ENCODE measurements at regions of chrX and their contacts with region 1.

Region 1: DNA sequence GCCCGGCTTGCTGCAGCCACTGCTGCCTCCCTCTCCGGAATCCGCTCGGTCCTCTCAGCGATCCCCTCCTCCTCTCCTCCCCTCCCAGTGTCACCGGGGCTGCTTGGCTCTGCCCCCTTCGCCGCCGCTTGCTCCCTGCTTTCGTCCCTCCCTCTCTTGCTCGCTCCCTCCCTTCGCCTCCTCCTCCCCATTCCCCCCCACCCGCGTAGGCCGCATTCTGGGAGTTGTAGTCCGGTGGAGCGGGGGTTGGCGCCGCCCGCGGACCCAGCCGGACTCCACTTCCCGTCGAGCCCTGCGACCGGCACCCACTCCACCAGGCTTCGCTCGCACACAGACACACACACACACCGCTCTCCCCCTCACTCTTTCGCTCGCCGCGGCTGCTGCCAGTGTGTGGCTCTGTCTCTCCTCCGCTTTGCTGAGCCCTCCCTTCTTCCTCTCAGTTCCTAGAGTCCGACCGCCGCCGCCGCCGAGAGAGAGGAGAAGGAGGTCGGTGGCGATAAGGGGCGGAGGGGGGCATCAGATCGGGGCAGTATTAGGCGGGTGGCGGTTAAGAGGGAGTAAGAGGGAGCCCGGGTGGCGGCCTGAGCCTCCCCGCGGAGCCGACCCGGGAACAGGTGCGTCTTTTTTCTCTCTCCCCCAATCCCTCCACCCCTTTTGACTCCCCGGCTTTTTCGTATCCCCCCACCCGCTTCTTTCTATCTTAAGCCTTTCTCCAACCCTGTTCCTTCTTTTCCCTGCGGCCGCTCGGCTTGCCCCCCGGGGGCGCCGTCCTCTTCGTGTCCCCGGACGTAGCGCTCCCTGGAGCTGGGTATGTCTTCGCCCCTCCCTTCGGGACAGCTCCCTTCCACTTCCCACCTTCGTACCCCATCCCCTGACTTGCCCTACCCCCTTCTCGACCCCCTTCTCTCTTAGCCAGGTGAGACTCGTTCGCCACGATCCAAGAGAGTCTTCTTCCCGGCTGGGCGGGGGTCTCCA is at the start of gene BCORL1:
- DNase-seq: peak; percentile 90 to 93 (median 92)
- ATAC-seq: peak; percentile 93 to 98 (median 96)
- H3K4me3 ChIP-seq: peak within 1 kb of the TSS in 3 of 12 donors; percentile 39 to 60 (median 48)
- H3K27ac ChIP-seq: peak within 1 kb of the TSS in 11 of 12 donors; percentile 39 to 87 (median 70)
- H3K4me1 ChIP-seq: peaks cover 0 to 10% (median 0%) of the 10 kb centered on the region in 12 donors
- H3K27me3 ChIP-seq: no peaks in the 10 kb centered on the region
- CTCF ChIP-seq: no peak
- POLR2A ChIP-seq: peak in 1 of 2 donors; percentile 71
- total RNA-seq, gene BCORL1: 5.3 to 11.0 (median 9.0) TPM

Region 2: DNA sequence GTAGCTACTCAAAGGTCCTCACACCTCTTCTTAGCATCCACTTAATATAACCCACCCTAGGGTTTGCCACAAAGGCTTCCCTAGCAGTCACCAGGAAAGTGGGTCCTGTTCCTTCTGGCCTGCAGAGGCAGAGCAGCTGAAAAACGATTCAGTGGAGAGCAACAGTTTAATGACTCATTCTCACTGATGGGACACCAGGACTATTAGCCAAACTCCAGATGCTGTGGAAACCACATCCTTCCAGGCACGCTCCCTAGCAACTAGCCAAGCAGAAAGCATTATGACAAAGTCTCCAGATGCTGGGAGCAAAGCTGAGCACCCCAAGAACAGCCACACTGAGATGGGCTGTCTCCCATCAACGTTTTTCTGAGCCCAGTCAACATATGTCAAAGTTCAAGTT is 106.9 kb before region 1 on chrX:
- intact Hi-C with region 1: no loop called
- DNase-seq: no peak
- ATAC-seq: no peak
- H3K4me3 ChIP-seq: no peak overlapping the region
- H3K27ac ChIP-seq: no peak overlapping the region
- H3K4me1 ChIP-seq: no peaks in the 10 kb centered on the region
- H3K27me3 ChIP-seq: peaks cover 0 to 3% (median 0%) of the 10 kb centered on the region in 9 donors
- CTCF ChIP-seq: no peak
- POLR2A ChIP-seq: no peak

Region 3: GRCh38 chrX:129957241-129958082 is 25.1 kb before region 1 on chrX:
- intact Hi-C with region 1: loop called in 1 of 10 experiments (anchors 2 kb)
- DNase-seq: peak; percentile 67 to 81 (median 80)
- ATAC-seq: peak; percentile 68 to 88 (median 86)
- H3K4me3 ChIP-seq: peak overlapping the region; percentile 4 to 55 (median 50)
- H3K27ac ChIP-seq: peak overlapping the region in 11 of 12 donors; percentile 28 to 79 (median 59)
- H3K4me1 ChIP-seq: peaks cover 0 to 17% (median under 1%) of the 10 kb centered on the region in 12 donors
- H3K27me3 ChIP-seq: peaks cover 0 to 6% (median 0%) of the 10 kb centered on the region in 9 donors
- CTCF ChIP-seq: no peak
- POLR2A ChIP-seq: peak in 1 of 2 donors; percentile 31

Region 4: DNA sequence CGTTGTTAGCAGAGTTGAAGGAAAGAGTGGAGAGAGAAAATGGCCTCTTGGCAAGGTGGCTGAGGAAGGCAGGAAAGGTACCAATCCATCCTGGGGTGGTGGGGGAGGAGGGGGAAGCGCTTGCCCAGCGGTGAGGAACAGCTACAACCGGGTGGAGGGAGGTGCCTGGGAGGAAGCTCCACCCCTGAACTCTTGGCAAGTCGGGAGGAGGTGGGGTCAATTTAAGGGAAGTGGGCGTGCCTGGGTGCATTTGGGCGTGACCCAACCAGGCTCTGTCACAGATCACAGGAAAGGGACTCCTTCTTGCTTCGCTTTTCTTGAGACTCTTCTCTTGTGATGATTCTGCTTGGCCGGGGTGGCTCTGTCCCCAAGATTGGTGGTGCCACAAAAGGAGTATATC is 41.6 kb after region 1 on chrX:
- intact Hi-C with region 1: loop called in 1 of 10 experiments (anchors 5 kb)
- DNase-seq: peak; percentile 76 to 82 (median 81)
- ATAC-seq: peak; percentile 80 to 98 (median 92)
- H3K4me3 ChIP-seq: no peak overlapping the region
- H3K27ac ChIP-seq: peak overlapping the region in 4 of 12 donors; percentile 6 to 41 (median 26)
- H3K4me1 ChIP-seq: peaks cover 0 to 14% (median 5%) of the 10 kb centered on the region in 12 donors
- H3K27me3 ChIP-seq: no peaks in the 10 kb centered on the region
- CTCF ChIP-seq: no peak
- POLR2A ChIP-seq: no peak

Region 5: GRCh38 chrX:130060122-130061069 is 77.8 kb after region 1 on chrX:
- intact Hi-C with region 1: loop called in 1 of 10 experiments (anchors 10 kb)
- DNase-seq: peak; percentile 74 to 92 (median 81)
- ATAC-seq: peak; percentile 81 to 94 (median 92)
- H3K4me3 ChIP-seq: peak overlapping the region; percentile 21 to 67 (median 55)
- H3K27ac ChIP-seq: peak overlapping the region in 11 of 12 donors; percentile 18 to 77 (median 43)
- H3K4me1 ChIP-seq: peaks cover 0 to 6% (median 0%) of the 10 kb centered on the region in 12 donors
- H3K27me3 ChIP-seq: no peaks in the 10 kb centered on the region
- CTCF ChIP-seq: peak; percentile 74 to 90 (median 80)
- POLR2A ChIP-seq: peak in 1 of 2 donors; percentile 9